CD4-positive, alpha-beta T cell (primary cell): ENCODE measurements at regions of chr15 and their contacts with region 1.

Region 1: GRCh38 chr15:89893696-89894455 is at the start of gene AP3S2:
- DNase-seq: peak; percentile 81 to 94 (median 85)
- ATAC-seq: peak; percentile 90
- H3K4me3 ChIP-seq: peak within 1 kb of the TSS; percentile 86
- H3K4me3 Mint-ChIP-seq: peak within 1 kb of the TSS; percentile 96
- H3K27ac ChIP-seq: peak within 1 kb of the TSS; percentile 60 to 74
- H3K27ac Mint-ChIP-seq: peak within 1 kb of the TSS; percentile 95
- H3K4me1 ChIP-seq: peaks cover 29% of the 10 kb centered on the region
- H3K4me1 Mint-ChIP-seq: peaks cover 42% of the 10 kb centered on the region
- H3K27me3 ChIP-seq: no peaks in the 10 kb centered on the region
- H3K27me3 Mint-ChIP-seq: no peaks in the 10 kb centered on the region
- CTCF ChIP-seq: no peak
- total RNA-seq, gene AP3S2: 18.9 to 20.5 TPM

Region 2: DNA sequence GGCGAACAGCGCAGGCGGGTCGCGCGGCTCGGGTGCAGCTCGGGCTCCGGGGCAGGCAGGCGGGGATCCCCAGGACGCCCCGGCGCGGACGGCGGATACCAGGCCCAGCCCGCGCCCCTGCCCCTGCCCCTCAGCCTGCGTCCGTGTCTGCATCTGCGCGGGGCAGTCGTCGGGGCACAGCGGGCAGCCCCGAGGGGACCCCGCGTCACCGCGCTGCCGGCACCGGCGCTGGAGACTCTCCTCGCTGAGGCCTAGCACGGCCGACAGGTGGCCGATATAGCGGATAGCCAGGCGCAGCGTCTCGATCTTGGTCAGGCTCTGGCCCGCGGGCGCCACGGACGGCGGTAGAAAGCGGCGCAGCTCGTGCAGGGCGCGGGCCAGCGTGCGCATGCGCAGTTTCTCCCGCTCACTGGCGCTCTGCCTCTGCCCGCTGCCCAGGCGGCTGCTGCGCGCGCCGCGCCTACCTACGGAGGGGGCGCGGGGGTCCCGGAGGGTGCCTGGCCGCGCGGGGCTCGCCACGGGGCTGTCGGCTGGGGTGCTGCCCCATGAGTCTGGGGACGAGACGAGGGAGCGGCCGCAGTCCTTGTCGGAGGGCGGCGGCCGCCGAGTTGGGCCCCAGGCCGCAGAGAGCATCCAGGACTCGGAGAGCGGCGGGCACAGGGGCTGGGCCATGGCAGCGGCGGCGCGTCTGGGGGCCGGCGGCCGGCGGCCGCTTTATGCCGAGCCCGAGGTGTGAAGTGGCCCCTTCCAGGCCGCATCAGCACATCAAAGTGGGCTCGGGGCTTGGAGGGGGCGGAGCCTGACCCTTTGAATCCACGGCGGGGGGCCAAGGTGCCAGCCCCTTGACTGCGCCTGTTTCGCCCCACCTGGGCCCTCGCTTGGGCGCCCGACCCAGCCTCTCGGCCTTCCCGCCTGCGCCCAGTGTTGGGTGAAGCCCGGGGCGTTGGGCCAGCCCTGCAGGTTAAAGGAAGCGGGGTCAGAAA is 143.0 kb before region 1 on chr15 and contains the start of gene MESP1:
- CTCF ChIA-PET with region 1: no interaction called
- POLR2A ChIA-PET with region 1: interaction called, 4 read pairs
- intact Hi-C with region 1: loop called in 1 of 2 experiments (anchors 5 kb)
- DNase-seq: peak; percentile 75 to 95 (median 84)
- ATAC-seq: peak; percentile 94
- H3K4me3 ChIP-seq: peak within 1 kb of the TSS; percentile 47
- H3K4me3 Mint-ChIP-seq: peak within 1 kb of the TSS; percentile 82
- H3K27ac ChIP-seq: no peak within 1 kb of the TSS
- H3K27ac Mint-ChIP-seq: no peak within 1 kb of the TSS
- H3K4me1 ChIP-seq: peaks cover 18% of the 10 kb centered on the region
- H3K4me1 Mint-ChIP-seq: no peaks in the 10 kb centered on the region
- H3K27me3 ChIP-seq: peaks cover 2 to 8% of the 10 kb centered on the region in 2 experiments
- H3K27me3 Mint-ChIP-seq: peaks cover 18% of the 10 kb centered on the region
- CTCF ChIP-seq: peak; percentile 80
- total RNA-seq, gene MESP1: 0.22 TPM in 1 of 2 experiments, not detected in the other

Region 3: DNA sequence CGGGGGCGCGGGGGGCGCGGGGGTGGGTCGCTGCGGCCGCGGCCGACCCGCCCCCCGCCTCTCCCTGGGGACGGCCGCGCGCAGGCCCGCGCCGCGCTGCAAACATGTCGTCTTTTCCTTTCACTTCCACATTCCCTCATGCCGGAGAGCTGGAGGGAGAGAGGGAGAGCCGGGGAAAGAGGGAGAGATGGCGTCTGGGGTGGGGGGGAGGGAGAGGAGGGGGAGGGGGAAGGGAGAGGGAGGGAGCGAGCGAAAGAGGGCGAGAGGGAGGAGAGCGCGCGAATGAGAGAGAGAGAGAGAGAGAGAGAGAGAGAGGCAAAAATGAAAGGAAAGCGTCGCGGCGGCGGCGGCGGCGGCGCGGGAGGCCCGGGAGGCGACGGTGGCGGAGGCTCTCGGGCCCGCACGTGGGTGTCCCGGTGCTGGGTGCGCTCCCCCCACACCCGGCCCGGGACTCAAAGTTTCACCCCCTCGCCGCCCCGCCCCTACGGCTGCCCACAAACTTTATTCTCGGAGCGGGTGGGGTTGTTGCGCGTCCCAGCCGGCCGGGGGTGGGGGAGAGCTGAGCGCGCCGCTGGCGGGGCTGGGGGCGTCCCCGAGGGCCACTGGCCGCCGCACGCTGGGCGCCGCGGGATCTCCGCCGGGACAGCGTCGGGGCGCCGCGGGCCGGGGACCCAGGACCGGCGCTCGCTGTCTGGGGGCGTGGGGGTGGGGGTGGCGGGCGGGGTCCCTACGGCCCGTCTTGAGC is 108.0 kb after region 1 on chr15:
- CTCF ChIA-PET with region 1: no interaction called
- POLR2A ChIA-PET with region 1: interaction called, 16 read pairs
- intact Hi-C with region 1: loop called in 1 of 2 experiments (anchors 5 kb)
- DNase-seq: peak; percentile 29 to 85 (median 54)
- ATAC-seq: peak; percentile 64
- H3K4me3 ChIP-seq: peak overlapping the region; percentile 60
- H3K4me3 Mint-ChIP-seq: peak overlapping the region; percentile 88
- H3K27ac ChIP-seq: no peak overlapping the region
- H3K27ac Mint-ChIP-seq: peak overlapping the region; percentile 97
- H3K4me1 ChIP-seq: peaks cover 54% of the 10 kb centered on the region
- H3K4me1 Mint-ChIP-seq: peaks cover 51% of the 10 kb centered on the region
- H3K27me3 ChIP-seq: no peaks in the 10 kb centered on the region
- H3K27me3 Mint-ChIP-seq: peaks cover 5% of the 10 kb centered on the region
- CTCF ChIP-seq: no peak

Region 4: DNA sequence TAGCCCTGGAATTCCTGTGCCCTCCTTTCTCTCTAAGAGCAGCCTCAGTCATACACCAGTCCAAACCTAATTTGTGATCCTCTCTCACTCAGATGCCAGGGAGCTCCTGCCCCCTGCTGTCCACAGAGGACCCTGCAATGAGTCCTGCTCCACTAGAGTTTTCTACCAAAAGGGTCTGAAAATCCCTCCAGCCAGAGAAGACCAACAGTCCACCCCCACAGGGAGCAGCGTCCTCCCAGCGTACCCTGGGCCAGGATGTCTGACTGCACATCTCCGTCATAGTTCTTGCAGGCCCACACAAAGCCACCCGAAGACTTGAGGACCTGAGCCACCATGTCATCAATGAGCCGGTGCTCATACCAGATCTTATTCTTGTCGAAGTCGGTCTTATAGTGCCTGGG is 193.0 kb after region 1 on chr15:
- CTCF ChIA-PET with region 1: interaction called, 6 read pairs
- POLR2A ChIA-PET with region 1: no interaction called
- intact Hi-C with region 1: loop called (anchors 1 to 5 kb)
- DNase-seq: peak in 13 of 14 experiments; percentile 23 to 71 (median 47)
- ATAC-seq: peak; percentile 85
- H3K4me3 ChIP-seq: no peak overlapping the region
- H3K4me3 Mint-ChIP-seq: no peak overlapping the region
- H3K27ac ChIP-seq: no peak overlapping the region
- H3K27ac Mint-ChIP-seq: peak overlapping the region; percentile 59
- H3K4me1 ChIP-seq: peaks cover 11% of the 10 kb centered on the region
- H3K4me1 Mint-ChIP-seq: peaks cover 9% of the 10 kb centered on the region
- H3K27me3 ChIP-seq: no peaks in the 10 kb centered on the region
- H3K27me3 Mint-ChIP-seq: no peaks in the 10 kb centered on the region
- CTCF ChIP-seq: peak; percentile 66

Region 5: DNA sequence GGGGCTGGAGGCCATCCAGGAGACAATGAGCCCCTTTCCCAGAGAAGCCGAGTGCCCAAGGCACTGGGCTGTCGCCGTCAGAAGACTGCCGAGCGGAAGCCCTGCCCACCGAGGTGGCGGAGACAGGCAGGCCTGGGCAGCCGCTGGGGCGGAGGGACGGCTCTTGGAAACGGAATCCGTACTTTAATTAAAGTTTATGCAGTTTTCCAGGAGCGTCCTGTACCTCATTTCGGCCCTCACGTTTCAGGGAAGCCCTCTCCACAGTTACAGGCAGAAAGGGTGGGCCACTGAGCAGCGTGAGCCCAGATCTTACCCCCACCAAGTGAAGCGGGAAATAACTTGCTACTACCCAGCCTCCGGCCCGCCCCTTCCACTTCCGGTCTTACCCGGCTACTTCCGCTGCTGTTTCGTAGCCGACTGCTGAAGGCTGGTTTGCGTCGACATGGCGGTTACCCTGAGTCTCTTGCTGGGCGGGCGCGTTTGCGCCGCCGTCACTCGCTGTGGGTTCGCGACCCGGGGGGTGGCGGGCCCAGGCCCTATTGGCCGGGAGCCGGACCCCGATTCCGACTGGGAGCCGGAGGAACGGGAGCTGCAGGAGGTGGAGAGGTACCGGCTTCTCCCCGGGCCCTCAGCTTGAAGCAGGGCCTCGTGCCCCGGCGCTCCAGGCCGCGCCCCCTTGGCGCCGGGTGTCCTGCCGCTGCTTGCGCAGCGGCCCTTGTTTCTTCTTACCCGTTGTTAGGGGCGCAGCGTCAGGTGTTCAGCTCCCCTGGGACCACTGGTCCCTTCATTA is 371.6 kb after region 1 on chr15 and contains the start of gene NGRN:
- CTCF ChIA-PET with region 1: no interaction called
- POLR2A ChIA-PET with region 1: interaction called, 3 read pairs
- intact Hi-C with region 1: loop called in 1 of 2 experiments (anchors 10 kb)
- DNase-seq: peak; percentile 83 to 95 (median 90)
- ATAC-seq: peak; percentile 79
- H3K4me3 ChIP-seq: peak within 1 kb of the TSS; percentile 74
- H3K4me3 Mint-ChIP-seq: peak within 1 kb of the TSS; percentile 90
- H3K27ac ChIP-seq: peak within 1 kb of the TSS; percentile 94 to 97
- H3K27ac Mint-ChIP-seq: peak within 1 kb of the TSS; percentile 98
- H3K4me1 ChIP-seq: peaks cover 48% of the 10 kb centered on the region
- H3K4me1 Mint-ChIP-seq: peaks cover 57% of the 10 kb centered on the region
- H3K27me3 ChIP-seq: no peaks in the 10 kb centered on the region
- H3K27me3 Mint-ChIP-seq: no peaks in the 10 kb centered on the region
- CTCF ChIP-seq: no peak
- total RNA-seq, gene NGRN: 55.7 to 58.4 TPM